ENCODE measurements at regions of chr19 and their contacts with region 1.

Region 1: DNA sequence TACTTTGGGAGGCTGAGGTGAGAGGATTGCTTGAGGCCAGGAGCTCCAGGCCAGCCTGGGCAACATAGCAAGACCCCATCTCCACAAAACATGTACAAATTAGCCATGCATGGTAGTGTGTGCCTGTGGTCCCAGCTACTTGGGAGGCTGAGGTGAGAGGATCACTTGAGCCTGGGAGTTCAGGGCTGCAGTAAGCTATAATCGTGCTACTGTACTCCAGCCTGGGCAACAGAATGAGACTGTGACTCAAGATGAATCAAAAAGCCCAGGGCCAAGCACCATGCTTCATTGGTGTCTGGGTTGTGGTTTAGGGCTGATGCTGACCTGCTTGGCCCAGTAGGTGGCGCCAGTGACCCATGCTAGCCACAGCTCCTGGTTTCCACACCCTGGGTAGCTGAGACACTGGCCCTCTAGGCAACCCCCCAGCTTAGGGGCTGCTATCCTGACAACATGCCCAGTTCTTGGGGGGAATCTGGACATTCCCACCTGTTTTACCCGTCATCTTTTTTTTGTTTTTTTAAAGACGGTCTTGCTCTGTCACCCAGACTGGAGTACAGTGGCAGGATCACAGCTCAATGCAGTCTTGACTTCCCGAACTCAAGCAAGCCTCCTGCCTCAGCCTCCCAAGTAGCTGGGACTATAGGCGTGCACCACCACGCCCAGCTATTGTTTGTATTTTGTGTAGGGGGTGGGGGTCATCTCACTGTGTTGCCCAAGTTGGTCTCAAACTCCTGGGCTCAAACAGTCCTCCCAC is 5.5 kb downstream of the CCDC124 start:
- DNase-seq: peak; percentile 73 to 92 (median 82)
- ATAC-seq: peak; percentile 97
- H3K4me3 ChIP-seq: no peak overlapping the region
- H3K4me3 Mint-ChIP-seq: peak overlapping the region; percentile 60
- H3K27ac ChIP-seq: no peak overlapping the region
- H3K27ac Mint-ChIP-seq: no peak overlapping the region
- H3K4me1 ChIP-seq: peaks cover 9% of the 10 kb centered on the region
- H3K4me1 Mint-ChIP-seq: peaks cover 10% of the 10 kb centered on the region
- H3K27me3 ChIP-seq: no peaks in the 10 kb centered on the region
- H3K27me3 Mint-ChIP-seq: no peaks in the 10 kb centered on the region
- CTCF ChIP-seq: peak; percentile 89

Region 2: DNA sequence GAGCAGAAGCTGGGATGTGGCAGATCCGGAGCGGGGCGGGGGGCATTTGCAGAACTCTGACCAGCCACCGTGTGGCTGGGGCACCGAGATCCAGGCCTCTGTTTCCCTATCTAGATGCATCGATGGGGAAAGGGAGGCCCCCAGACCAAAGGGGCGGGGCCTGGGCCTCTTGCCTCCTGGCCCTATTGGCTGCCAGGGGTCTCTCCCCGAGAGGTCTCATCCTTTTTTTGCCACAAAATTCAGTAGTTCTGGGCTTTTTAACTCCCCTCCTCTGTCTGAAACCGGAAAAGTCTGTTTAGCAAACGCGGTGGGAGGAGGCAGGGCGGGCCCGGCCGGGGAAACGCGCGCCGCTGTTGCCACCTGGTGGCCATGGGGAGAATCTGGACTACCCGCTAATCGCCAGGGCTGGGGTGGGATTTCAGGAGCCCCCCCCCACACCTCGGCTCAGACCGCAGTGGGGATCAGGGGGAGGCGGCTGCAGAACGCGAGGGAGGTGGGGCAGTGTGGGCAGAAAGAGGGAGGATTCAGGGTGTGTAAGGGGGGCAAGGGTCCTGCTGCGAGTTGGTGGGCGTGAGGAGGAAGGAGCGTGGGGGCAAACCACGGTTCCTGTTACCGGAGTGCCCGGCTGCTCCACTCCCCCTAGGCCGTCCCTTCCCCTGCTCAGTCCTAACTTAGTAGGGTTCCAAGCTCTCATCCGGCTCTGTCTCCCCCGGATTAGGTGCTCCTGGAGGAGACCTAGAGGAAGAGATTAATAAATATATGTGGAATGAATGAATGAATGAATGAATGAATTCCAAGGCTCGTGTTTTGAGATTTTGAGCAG is 120.2 kb after region 1 on chr19:
- CTCF ChIA-PET with region 1: interaction called, 10 read pairs
- POLR2A ChIA-PET with region 1: no interaction called
- intact Hi-C with region 1: loop called (anchors 1 to 2 kb)
- DNase-seq: peak; percentile 74 to 91 (median 82)
- ATAC-seq: peak; percentile 97
- H3K4me3 ChIP-seq: peak overlapping the region; percentile 25
- H3K4me3 Mint-ChIP-seq: no peak overlapping the region
- H3K27ac ChIP-seq: peak overlapping the region in 1 of 2 donors; percentile 22
- H3K27ac Mint-ChIP-seq: peak overlapping the region; percentile 63
- H3K4me1 ChIP-seq: peaks cover 13% of the 10 kb centered on the region
- H3K4me1 Mint-ChIP-seq: peaks cover 17% of the 10 kb centered on the region
- H3K27me3 ChIP-seq: no peaks in the 10 kb centered on the region
- H3K27me3 Mint-ChIP-seq: no peaks in the 10 kb centered on the region
- CTCF ChIP-seq: peak; percentile 98

Region 3: DNA sequence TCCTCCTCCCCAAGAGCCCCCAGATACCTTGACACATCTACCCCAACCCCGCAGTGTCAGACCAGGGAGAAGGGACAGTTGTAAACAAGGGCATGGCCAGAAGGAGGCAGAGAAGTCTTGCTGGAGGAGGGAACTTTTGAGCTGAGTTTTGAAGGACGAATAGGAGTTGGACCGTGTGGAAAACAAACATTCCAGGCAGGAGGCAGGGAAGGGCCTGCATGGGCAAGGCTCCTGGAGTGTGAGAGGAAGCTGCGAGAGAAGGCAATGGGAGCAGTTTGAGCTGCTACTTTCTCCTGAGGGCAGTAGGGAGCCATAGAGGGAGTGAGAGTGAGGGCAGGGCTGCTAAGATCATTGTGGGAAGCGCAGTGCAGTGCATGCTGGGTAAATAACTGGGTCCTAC is 125.2 kb after region 1 on chr19:
- CTCF ChIA-PET with region 1: interaction called, 10 read pairs
- POLR2A ChIA-PET with region 1: no interaction called
- intact Hi-C with region 1: loop called (anchors 1 to 2 kb)
- DNase-seq: peak in 8 of 14 experiments; percentile 24 to 65 (median 41)
- ATAC-seq: no peak
- H3K4me3 ChIP-seq: no peak overlapping the region
- H3K4me3 Mint-ChIP-seq: no peak overlapping the region
- H3K27ac ChIP-seq: no peak overlapping the region
- H3K27ac Mint-ChIP-seq: no peak overlapping the region
- H3K4me1 ChIP-seq: peaks cover 4% of the 10 kb centered on the region
- H3K4me1 Mint-ChIP-seq: peaks cover 4% of the 10 kb centered on the region
- H3K27me3 ChIP-seq: no peaks in the 10 kb centered on the region
- H3K27me3 Mint-ChIP-seq: no peaks in the 10 kb centered on the region
- CTCF ChIP-seq: no peak

Region 4: DNA sequence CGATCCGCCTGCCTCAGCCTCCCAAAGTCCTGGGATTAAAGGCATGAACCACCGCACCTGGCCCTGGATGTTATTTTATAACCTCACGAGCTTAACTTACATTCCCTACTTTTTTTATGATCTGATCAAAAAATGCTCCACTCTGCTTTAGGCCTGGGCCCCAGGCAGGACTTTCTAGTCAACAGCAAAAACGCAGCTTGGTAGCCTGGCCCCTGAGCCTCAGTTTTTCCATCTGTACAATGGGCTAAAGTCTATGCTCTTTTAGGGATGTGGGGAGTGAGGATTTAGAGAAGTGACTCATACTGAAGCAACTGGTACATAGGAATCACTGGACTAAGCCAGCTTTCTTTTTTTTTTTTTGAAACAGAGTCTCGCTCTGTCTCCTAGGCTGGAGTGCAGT is 202.8 kb after region 1 on chr19:
- CTCF ChIA-PET with region 1: no interaction called
- POLR2A ChIA-PET with region 1: no interaction called
- intact Hi-C with region 1: no loop called
- DNase-seq: no peak
- ATAC-seq: no peak
- H3K4me3 ChIP-seq: no peak overlapping the region
- H3K4me3 Mint-ChIP-seq: no peak overlapping the region
- H3K27ac ChIP-seq: no peak overlapping the region
- H3K27ac Mint-ChIP-seq: no peak overlapping the region
- H3K4me1 ChIP-seq: no peaks in the 10 kb centered on the region
- H3K4me1 Mint-ChIP-seq: no peaks in the 10 kb centered on the region
- H3K27me3 ChIP-seq: no peaks in the 10 kb centered on the region
- H3K27me3 Mint-ChIP-seq: no peaks in the 10 kb centered on the region
- CTCF ChIP-seq: no peak

Region 5: DNA sequence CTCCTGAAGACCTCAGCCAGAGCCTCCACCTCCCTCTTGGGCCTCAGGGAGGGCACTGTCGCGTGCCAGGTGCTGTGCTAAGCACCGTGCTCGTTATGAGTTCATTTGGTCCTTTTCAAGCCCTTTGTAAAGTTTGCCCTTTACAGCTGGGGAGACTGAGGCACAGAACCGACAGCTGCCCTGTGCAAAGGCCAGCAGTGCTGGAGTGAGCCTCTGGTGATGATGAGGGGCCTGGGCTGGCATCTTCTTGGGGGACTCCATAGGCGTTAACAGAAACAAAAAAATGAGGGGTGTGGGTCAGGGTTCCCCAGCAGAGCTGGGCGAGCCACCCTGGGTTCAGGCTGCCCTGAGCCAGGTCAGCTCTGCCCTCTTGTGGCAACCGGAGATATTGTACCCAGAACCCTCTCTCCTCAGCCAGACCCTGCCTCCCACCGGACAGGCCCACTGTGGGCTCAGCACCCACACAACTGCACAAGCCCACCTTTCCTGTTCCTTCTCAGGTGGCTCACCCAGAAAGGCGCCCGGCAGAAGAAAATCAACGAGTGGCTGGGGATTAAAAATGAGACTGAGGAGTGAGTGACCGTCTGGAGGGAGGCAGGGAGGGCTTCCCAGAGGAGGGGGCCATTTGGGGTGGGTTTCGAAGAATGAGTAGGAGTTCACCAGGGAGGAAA is 229.8 kb after region 1 on chr19:
- CTCF ChIA-PET with region 1: interaction called, 3 read pairs
- POLR2A ChIA-PET with region 1: no interaction called
- intact Hi-C with region 1: loop called (anchors 2 to 5 kb)
- DNase-seq: peak; percentile 42 to 80 (median 53)
- ATAC-seq: peak; percentile 97
- H3K4me3 ChIP-seq: no peak overlapping the region
- H3K4me3 Mint-ChIP-seq: no peak overlapping the region
- H3K27ac ChIP-seq: no peak overlapping the region
- H3K27ac Mint-ChIP-seq: no peak overlapping the region
- H3K4me1 ChIP-seq: peaks cover 16% of the 10 kb centered on the region
- H3K4me1 Mint-ChIP-seq: peaks cover 4% of the 10 kb centered on the region
- H3K27me3 ChIP-seq: no peaks in the 10 kb centered on the region
- H3K27me3 Mint-ChIP-seq: no peaks in the 10 kb centered on the region
- CTCF ChIP-seq: peak; percentile 72

Region 6: DNA sequence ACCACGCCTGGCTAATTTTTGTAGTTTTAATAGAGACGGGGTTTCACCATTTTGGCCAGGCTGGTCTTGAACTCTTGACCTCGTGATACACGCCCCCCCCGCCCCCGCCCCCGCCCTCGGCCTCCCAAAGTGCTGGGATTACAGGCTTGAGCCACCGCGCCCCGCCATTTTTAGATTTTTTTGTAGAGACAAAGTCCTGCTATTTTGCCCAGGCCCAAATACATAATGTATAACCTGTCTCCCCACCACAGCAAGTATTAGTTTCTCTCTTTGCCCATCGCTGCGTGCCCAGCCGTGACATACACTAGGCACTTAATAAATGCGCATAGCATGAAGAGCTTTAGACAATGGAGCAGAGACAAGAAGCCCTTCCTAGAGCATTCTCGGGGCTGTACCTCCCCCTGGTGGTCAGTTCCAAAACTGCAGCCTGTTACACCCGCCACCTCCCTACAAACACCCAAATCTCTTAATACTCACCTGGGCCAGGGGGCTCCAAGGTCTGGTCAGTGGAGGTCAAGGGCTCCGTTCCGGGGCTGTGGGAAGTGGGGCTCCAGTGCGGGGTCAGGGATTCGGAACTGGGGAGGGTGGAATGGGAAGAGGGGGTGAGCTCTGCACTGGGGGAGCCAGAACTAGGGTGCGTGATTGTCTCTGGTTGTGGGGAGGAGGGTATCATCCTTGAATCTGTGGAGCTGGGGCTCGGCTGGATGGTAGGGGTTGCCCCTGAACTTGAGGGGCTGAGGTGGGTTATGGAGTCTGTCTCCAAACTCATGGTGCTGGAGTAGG is 313.5 kb after region 1 on chr19:
- CTCF ChIA-PET with region 1: interaction called, 3 read pairs
- POLR2A ChIA-PET with region 1: no interaction called
- intact Hi-C with region 1: loop called (anchors 2 to 5 kb)
- DNase-seq: peak; percentile 65 to 90 (median 81)
- ATAC-seq: peak; percentile 91
- H3K4me3 ChIP-seq: no peak overlapping the region
- H3K4me3 Mint-ChIP-seq: no peak overlapping the region
- H3K27ac ChIP-seq: no peak overlapping the region
- H3K27ac Mint-ChIP-seq: no peak overlapping the region
- H3K4me1 ChIP-seq: peaks cover 8% of the 10 kb centered on the region
- H3K4me1 Mint-ChIP-seq: no peaks in the 10 kb centered on the region
- H3K27me3 ChIP-seq: peaks cover 8 to 12% of the 10 kb centered on the region in 2 experiments
- H3K27me3 Mint-ChIP-seq: peaks cover 31% of the 10 kb centered on the region
- CTCF ChIP-seq: peak; percentile 80